ENCODE measurements at regions of chr5 and their contacts with region 1.

Region 1: DNA sequence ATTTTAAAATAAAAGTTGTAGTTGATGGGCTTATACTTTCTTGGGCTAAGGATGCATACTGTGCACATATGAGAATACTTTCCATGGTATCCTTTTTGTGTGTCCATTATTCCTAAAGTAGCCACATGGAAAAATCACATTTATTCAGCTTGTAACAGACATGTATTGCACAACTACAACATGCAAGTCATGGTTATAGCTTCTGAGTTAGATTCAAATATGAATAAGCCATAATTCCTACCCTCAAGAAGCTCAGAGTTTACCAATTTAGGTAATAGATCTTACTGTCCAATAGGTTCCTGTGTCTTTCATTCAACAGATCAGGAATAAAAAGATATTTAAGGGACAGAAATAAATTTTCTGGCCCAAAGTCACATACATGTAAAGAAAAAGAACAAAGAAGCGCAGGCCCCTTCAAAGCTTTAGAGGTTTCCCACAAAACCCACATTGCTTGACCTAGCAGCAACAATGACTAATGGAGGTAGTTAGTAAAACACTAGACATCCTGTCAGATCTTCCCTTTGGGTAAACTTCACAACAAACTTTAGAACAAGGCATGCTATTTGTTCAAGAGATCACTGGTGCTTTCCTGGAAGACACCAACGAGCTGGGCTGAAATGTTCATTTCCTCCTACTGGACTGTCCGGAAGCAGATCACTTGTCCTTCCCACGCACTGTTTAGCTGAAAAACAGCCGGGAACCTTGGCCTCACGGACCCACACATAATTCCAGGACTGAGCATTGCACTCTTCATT is 78.4 kb upstream of the ITGA1 start:
- DNase-seq: peak in 1 of 9 donors; percentile 36
- ATAC-seq: no peak
- H3K4me3 ChIP-seq: no peak overlapping the region
- H3K4me3 Mint-ChIP-seq: peak overlapping the region in 1 of 10 donors; percentile 50
- H3K27ac ChIP-seq: no peak overlapping the region
- H3K27ac Mint-ChIP-seq: peak overlapping the region in 1 of 9 donors; percentile 61
- H3K4me1 ChIP-seq: peaks cover 20 to 39% of the 10 kb centered on the region in 2 donors
- H3K4me1 Mint-ChIP-seq: peaks cover 24 to 83% (median 63%) of the 10 kb centered on the region in 7 donors
- H3K27me3 ChIP-seq: no peaks in the 10 kb centered on the region
- H3K27me3 Mint-ChIP-seq: peaks cover 0 to 5% (median 0%) of the 10 kb centered on the region in 5 donors

Region 2: GRCh38 chr5:52356311-52356918 is 352.9 kb before region 1 on chr5:
- CTCF ChIA-PET with region 1: no interaction called
- POLR2A ChIA-PET with region 1: no interaction called
- intact Hi-C with region 1: no loop called
- DNase-seq: no peak
- ATAC-seq: no peak
- H3K4me3 ChIP-seq: no peak overlapping the region
- H3K4me3 Mint-ChIP-seq: no peak overlapping the region
- H3K27ac ChIP-seq: no peak overlapping the region
- H3K27ac Mint-ChIP-seq: no peak overlapping the region
- H3K4me1 ChIP-seq: no peaks in the 10 kb centered on the region
- H3K4me1 Mint-ChIP-seq: no peaks in the 10 kb centered on the region
- H3K27me3 ChIP-seq: no peaks in the 10 kb centered on the region
- H3K27me3 Mint-ChIP-seq: peaks cover 0 to 4% (median 0%) of the 10 kb centered on the region in 5 donors

Region 3: GRCh38 chr5:52674815-52675545 is 34.4 kb before region 1 on chr5:
- CTCF ChIA-PET with region 1: no interaction called
- POLR2A ChIA-PET with region 1: no interaction called
- intact Hi-C with region 1: no loop called
- DNase-seq: no peak
- ATAC-seq: no peak
- H3K4me3 ChIP-seq: no peak overlapping the region
- H3K4me3 Mint-ChIP-seq: peak overlapping the region in 4 of 10 donors; percentile 2 to 77 (median 65)
- H3K27ac ChIP-seq: no peak overlapping the region
- H3K27ac Mint-ChIP-seq: no peak overlapping the region
- H3K4me1 ChIP-seq: no peaks in the 10 kb centered on the region
- H3K4me1 Mint-ChIP-seq: peaks cover 8 to 38% (median 22%) of the 10 kb centered on the region in 7 donors
- H3K27me3 ChIP-seq: no peaks in the 10 kb centered on the region
- H3K27me3 Mint-ChIP-seq: peaks cover 0 to 42% (median 0%) of the 10 kb centered on the region in 5 donors

Region 4: DNA sequence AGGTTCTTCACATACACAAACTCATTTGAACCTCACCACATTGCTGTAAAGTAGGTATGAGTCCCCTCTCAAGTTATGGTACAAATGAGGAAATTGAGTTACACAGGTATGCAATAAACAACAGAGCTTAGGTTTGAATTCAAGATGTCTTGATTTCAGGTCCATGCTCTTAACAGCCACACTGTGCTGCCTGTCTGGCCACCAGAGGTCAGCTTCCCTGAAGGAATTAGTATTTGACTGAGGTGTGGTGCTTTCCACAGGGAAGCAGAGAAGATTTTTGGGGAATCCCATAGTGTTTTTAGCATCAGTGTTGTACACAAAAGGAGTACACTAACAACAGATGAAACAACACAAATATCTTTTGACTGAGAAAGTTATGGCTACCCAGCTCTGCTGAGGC is 16.1 kb before region 1 on chr5:
- CTCF ChIA-PET with region 1: interaction called, 4 read pairs
- POLR2A ChIA-PET with region 1: no interaction called
- intact Hi-C with region 1: loop called in 1 of 2 experiments (anchors 2 kb)
- DNase-seq: peak in 7 of 9 donors; percentile 10 to 27 (median 25)
- ATAC-seq: peak; percentile 48
- H3K4me3 ChIP-seq: no peak overlapping the region
- H3K4me3 Mint-ChIP-seq: no peak overlapping the region
- H3K27ac ChIP-seq: no peak overlapping the region
- H3K27ac Mint-ChIP-seq: peak overlapping the region in 2 of 9 donors; percentile 1 to 18
- H3K4me1 ChIP-seq: no peaks in the 10 kb centered on the region
- H3K4me1 Mint-ChIP-seq: peaks cover 0 to 17% (median 7%) of the 10 kb centered on the region in 7 donors
- H3K27me3 ChIP-seq: no peaks in the 10 kb centered on the region
- H3K27me3 Mint-ChIP-seq: peaks cover 0 to 26% (median 0%) of the 10 kb centered on the region in 5 donors

Measured in naive thymus-derived CD4-positive, alpha-beta T cell (primary cell).